MCF 10A (cell line): ENCODE measurements at regions of chr4 and their contacts with region 1.

Region 1: DNA sequence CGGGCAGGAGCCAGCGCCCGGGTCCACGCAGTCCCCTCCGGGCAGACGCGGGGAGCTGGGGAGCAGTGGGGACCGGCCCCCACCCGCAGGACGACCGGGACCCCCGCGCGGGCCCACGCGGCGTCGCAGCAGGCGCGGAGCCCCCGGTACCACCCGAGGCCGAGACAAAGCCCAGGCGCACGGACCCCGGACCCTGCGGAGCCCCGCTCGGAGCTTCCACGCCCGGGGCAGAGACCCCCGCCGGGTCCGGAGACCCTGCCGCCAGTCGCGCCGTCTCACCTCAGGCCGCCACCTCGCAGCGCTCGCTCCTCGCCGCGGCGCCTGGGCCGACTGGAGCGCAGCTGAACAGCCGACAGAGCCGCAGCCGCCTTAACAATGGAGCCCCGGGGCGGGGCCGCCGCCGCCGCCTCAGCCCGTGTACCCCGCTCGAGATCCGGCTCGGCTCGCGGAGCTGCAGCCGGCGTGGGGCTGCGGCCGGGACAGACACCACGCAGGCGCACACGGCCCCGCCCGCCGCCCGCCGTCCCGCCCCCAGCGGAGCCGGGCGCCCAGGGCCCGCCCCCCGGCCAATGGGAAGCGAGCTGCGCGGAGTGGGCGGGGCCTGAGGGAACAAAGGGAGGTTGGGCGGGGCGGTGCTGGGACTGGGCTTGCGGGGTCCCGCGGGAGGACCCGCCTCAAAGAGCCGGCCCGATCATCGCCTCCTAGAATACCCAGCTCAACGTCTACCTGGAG is at the start of gene AFAP1:
- DNase-seq: peak; percentile 86
- H3K4me3 Mint-ChIP-seq: peak within 1 kb of the TSS; percentile 77
- H3K27ac Mint-ChIP-seq: no peak within 1 kb of the TSS
- H3K4me1 Mint-ChIP-seq: peaks cover 26% of the 10 kb centered on the region
- H3K27me3 Mint-ChIP-seq: no peaks in the 10 kb centered on the region
- CTCF ChIP-seq: no peak
- total RNA-seq, gene AFAP1: 22.5 and 29.4 TPM in 2 replicates

Region 2: GRCh38 chr4:7929118-7929951 is 10.2 kb before region 1 on chr4:
- CTCF ChIA-PET with region 1: interaction called, 8 read pairs
- POLR2A ChIA-PET with region 1: interaction called, 36 read pairs
- intact Hi-C with region 1: no loop called
- DNase-seq: peak; percentile 84
- H3K4me3 Mint-ChIP-seq: no peak overlapping the region
- H3K27ac Mint-ChIP-seq: peak overlapping the region; percentile 39
- H3K4me1 Mint-ChIP-seq: peaks cover 29% of the 10 kb centered on the region
- H3K27me3 Mint-ChIP-seq: no peaks in the 10 kb centered on the region
- CTCF ChIP-seq: peak; percentile 43

Region 3: DNA sequence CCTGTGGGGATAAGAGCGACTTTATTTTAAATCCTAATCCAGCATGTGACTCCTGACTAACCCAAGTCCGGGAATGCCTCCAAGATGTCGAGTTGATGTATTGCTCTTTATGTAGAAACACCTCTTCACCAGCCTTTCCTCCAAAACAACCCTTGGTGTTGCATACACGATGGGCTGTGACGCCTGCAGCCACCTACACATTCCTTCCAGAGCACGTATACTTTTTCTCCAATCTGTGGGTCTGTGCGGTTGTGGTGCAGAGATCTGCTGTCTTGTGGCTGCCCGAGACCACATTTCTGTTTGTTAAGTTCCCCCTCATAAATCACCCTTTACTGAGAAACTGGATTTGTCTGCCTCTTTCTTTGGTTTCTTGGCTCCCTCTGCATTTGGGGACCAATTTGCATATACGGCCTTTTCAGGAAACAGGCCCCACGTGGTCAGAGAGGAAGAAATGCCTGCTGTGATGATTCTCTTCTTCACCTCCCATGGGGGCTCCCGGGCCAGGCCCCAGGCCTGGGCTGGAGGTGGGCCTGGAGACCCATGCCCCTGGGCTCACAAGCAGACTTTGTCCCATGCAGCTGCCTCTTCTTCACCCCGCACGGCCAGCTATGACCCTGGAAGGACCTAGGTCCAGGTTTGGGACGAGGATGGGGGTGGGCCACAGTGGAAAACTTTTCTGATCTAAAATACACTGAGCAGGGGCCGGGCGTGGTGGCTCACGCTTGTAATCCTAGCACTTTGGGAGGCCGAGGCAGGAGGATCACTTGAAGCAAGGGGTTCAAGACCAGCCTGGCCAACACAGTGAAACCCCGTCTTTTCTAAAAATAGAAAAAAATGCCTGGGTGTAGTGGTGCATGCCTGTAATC is 21.5 kb after region 1 on chr4:
- CTCF ChIA-PET with region 1: interaction called, 4 read pairs
- POLR2A ChIA-PET with region 1: interaction called, 62 read pairs
- intact Hi-C with region 1: no loop called
- DNase-seq: peak; percentile 99
- H3K4me3 Mint-ChIP-seq: no peak overlapping the region
- H3K27ac Mint-ChIP-seq: peak overlapping the region; percentile 74
- H3K4me1 Mint-ChIP-seq: peaks cover 38% of the 10 kb centered on the region
- H3K27me3 Mint-ChIP-seq: no peaks in the 10 kb centered on the region
- CTCF ChIP-seq: no peak

Region 4: GRCh38 chr4:7978489-7978888 is 38.9 kb after region 1 on chr4:
- CTCF ChIA-PET with region 1: interaction called, 6 read pairs
- POLR2A ChIA-PET with region 1: interaction called, 13 read pairs
- intact Hi-C with region 1: loop called (anchors 2 kb)
- DNase-seq: peak; percentile 84
- H3K4me3 Mint-ChIP-seq: no peak overlapping the region
- H3K27ac Mint-ChIP-seq: peak overlapping the region; percentile 66
- H3K4me1 Mint-ChIP-seq: peaks cover 36% of the 10 kb centered on the region
- H3K27me3 Mint-ChIP-seq: peaks cover 3% of the 10 kb centered on the region
- CTCF ChIP-seq: no peak